ENCODE measurements at regions of chr12 and their contacts with region 1.

Region 1: GRCh38 chr12:109844983-109845823 is 12.0 kb upstream of the TRPV4 start:
- DNase-seq: peak; percentile 95
- ATAC-seq: peak; percentile 99
- H3K4me3 Mint-ChIP-seq: peak overlapping the region; percentile 21
- H3K27ac Mint-ChIP-seq: no peak overlapping the region
- H3K4me1 Mint-ChIP-seq: peaks cover 4% of the 10 kb centered on the region
- H3K27me3 Mint-ChIP-seq: no peaks in the 10 kb centered on the region

Region 2: DNA sequence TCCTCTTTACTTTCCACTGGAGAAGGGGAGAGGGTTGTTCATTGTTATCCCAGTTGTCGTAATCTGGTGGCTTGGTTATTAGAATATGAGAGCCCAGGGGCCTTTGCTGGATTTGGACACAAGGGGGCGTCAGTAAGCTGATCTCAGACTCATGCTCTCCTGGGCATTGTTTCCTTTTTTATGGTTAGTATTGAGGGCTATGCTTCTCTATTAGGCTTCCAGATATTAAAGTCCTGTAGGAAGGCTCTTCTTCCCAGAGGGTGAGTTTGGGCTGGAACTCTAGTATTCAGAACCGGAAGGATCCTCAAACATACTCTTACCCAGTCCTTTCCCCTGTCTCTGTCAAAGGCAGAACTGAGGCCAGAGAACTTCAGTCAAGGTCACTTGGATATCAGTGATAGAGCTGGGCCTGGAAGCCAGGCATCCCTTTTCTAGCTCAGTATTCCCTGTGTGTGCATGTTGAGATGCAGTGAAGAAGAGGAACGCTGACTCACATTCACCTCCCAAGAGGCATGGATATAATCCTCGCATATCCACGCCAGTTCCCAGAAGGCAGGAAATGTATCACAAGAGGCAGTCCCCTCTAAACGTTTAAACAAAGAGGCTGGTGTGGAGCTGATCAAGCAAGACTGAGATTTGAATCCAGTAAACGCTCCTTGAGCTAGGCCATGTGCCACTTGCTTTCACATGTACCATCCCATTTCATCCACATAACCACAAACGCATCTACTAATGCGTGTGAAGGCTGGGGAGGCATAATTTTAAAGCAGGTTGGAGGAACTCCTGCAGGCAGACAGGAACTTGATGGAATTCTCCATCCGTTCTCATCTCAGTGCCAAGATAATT is 326.2 kb before region 1 on chr12:
- CTCF ChIA-PET with region 1: interaction called, 4 read pairs
- POLR2A ChIA-PET with region 1: no interaction called
- intact Hi-C with region 1: loop called (anchors 1 to 2 kb)
- DNase-seq: peak; percentile 75
- ATAC-seq: peak; percentile 63
- H3K4me3 Mint-ChIP-seq: no peak overlapping the region
- H3K27ac Mint-ChIP-seq: no peak overlapping the region
- H3K4me1 Mint-ChIP-seq: no peaks in the 10 kb centered on the region
- H3K27me3 Mint-ChIP-seq: no peaks in the 10 kb centered on the region

Region 3: GRCh38 chr12:109597795-109598427 is 247.3 kb before region 1 on chr12:
- CTCF ChIA-PET with region 1: interaction called, 15 read pairs
- POLR2A ChIA-PET with region 1: no interaction called
- intact Hi-C with region 1: loop called in 1 of 2 experiments (anchors 5 kb)
- DNase-seq: peak; percentile 80
- ATAC-seq: peak; percentile 51
- H3K4me3 Mint-ChIP-seq: no peak overlapping the region
- H3K27ac Mint-ChIP-seq: no peak overlapping the region
- H3K4me1 Mint-ChIP-seq: peaks cover 31% of the 10 kb centered on the region
- H3K27me3 Mint-ChIP-seq: no peaks in the 10 kb centered on the region

Region 4: DNA sequence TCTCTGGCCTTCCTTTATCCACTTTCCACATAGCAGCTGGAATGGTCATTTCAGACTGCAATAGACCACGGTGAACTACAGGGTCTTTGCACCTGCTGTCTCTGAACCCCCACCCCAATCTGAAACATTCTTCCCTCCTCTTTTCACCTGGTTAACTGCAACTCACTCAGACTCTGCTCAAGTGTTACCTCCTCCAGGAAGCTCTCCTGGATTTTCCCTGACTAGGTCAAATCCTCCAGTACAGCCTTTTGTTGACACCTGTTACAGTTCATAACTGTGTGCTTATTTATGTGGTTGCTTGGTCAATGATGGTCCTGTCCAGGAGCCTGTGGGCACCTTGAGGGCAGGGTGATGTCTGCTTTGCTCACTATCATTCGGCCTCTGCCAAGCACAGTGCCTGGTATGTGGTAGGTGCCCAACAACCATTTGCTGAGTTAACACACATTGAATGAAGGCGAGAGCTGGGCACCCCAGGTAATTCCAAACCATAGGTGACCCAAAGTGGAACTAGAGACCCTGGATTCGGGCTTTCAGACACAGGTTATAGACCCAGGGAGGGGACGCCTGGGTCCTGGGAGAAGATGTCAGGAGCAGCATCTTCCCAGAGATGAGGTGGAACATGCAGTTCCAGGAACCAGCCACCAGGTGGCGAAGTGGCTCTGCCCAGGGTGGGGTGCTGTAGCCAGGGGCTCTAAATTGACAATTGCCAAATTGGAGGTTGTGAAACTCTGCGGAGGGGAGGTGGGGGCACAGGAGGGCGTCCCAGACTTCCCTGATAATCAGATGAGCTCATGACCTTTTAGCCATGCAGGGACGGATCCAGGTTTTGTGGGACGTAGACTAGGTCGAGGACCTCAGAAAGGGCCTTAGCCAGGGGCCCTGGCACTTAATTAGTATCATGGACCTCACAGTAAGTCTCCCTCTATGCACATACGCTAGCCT is 40.1 kb before region 1 on chr12:
- CTCF ChIA-PET with region 1: interaction called, 58 read pairs
- POLR2A ChIA-PET with region 1: no interaction called
- intact Hi-C with region 1: loop called (anchors 1 kb)
- DNase-seq: peak; percentile 80
- ATAC-seq: peak; percentile 81
- H3K4me3 Mint-ChIP-seq: no peak overlapping the region
- H3K27ac Mint-ChIP-seq: no peak overlapping the region
- H3K4me1 Mint-ChIP-seq: no peaks in the 10 kb centered on the region
- H3K27me3 Mint-ChIP-seq: no peaks in the 10 kb centered on the region

Region 5: GRCh38 chr12:109828236-109828550 is 17.0 kb before region 1 on chr12:
- CTCF ChIA-PET with region 1: interaction called, 14 read pairs
- POLR2A ChIA-PET with region 1: interaction called, 4 read pairs
- intact Hi-C with region 1: no loop called
- DNase-seq: no peak
- ATAC-seq: no peak
- H3K4me3 Mint-ChIP-seq: no peak overlapping the region
- H3K27ac Mint-ChIP-seq: no peak overlapping the region
- H3K4me1 Mint-ChIP-seq: no peaks in the 10 kb centered on the region
- H3K27me3 Mint-ChIP-seq: peaks cover 12% of the 10 kb centered on the region

Region 6: DNA sequence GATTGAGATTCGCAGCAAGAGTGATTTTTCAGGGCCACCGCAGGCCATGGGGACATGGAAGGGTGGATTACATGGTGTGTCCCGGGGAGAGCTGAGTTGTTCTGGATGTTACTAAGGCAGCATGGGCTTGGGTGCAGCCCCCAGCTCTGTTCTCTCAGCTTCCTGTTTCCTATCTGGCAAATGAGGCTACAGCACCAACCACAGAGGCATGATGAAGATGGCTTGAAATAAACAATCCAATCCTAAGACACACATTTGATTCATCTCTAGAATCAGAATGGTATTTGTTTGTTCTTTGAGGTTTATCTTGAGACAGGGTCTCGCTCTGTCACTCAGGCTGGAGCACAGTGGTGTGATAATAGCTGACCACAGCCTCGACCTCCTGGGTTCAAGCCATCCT is 13.6 kb after region 1 on chr12:
- CTCF ChIA-PET with region 1: interaction called, 12 read pairs
- POLR2A ChIA-PET with region 1: no interaction called
- intact Hi-C with region 1: no loop called
- DNase-seq: no peak
- ATAC-seq: no peak
- H3K4me3 Mint-ChIP-seq: no peak overlapping the region
- H3K27ac Mint-ChIP-seq: no peak overlapping the region
- H3K4me1 Mint-ChIP-seq: peaks cover 3% of the 10 kb centered on the region
- H3K27me3 Mint-ChIP-seq: no peaks in the 10 kb centered on the region

Measured in activated CD4-positive, alpha-beta T cell treated with anti-CD3 and anti-CD28 coated beads for 36 hours (primary cell).